Naive thymus-derived CD4-positive, alpha-beta T cell (primary cell): ENCODE measurements at regions of chr2 and their contacts with region 1.

Region 1: GRCh38 chr2:120680136-120680761 is 55.4 kb upstream of the GLI2 start:
- DNase-seq: peak; percentile 44 to 65 (median 59)
- ATAC-seq: peak; percentile 83
- H3K4me3 ChIP-seq: no peak overlapping the region
- H3K4me3 Mint-ChIP-seq: peak overlapping the region in 6 of 10 donors; percentile 0 to 48 (median 21)
- H3K27ac ChIP-seq: no peak overlapping the region
- H3K27ac Mint-ChIP-seq: peak overlapping the region in 6 of 9 donors; percentile 45 to 80 (median 72)
- H3K4me1 ChIP-seq: peaks cover 4% of the 10 kb centered on the region in 2 donors
- H3K4me1 Mint-ChIP-seq: peaks cover 0 to 5% (median 0%) of the 10 kb centered on the region in 7 donors
- H3K27me3 ChIP-seq: no peaks in the 10 kb centered on the region
- H3K27me3 Mint-ChIP-seq: peaks cover 18 to 50% (median 31%) of the 10 kb centered on the region in 5 donors

Region 2: DNA sequence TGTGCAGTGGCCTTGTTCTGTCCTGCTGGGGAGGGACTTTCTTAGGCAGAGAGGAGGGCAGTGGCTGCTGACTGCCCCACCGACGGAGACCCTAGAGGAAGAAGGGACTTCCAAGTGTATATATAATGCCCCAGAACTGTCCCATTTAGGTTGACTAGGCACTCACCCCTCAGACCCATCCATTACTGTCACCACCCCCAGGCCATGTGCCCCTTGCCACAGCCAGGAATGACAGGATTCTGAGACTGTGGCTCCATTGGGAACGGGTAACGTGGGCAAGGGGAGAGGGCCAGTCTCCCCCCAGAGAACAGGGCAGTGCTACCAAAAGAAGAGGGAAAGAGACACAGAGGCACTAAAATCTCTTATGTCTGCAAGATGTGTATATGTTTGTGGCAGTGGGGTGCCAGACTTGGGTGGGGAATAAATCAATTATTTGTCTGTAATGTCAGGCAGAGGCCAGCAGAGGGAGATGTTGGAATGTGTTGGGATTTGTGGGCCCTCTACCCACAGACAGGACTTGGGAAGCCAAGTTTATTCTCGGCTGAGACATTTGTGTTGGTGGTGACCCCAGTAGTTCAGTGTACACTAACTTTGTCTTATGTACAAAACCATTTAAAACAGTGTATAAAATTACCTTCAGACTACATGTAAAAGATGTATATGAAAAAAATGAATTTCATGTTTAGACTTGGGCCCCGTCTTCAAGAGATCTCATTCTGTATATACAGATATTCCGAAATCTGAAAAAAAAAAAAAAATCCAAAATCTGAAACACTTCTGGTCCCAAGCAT is 1272.6 kb before region 1 on chr2:
- CTCF ChIA-PET with region 1: no interaction called
- POLR2A ChIA-PET with region 1: no interaction called
- intact Hi-C with region 1: loop called in 1 of 2 experiments (anchors 2 kb)
- DNase-seq: peak in 6 of 9 donors; percentile 5 to 50 (median 30)
- ATAC-seq: peak; percentile 57
- H3K4me3 ChIP-seq: no peak overlapping the region
- H3K4me3 Mint-ChIP-seq: no peak overlapping the region
- H3K27ac ChIP-seq: no peak overlapping the region
- H3K27ac Mint-ChIP-seq: no peak overlapping the region
- H3K4me1 ChIP-seq: no peaks in the 10 kb centered on the region
- H3K4me1 Mint-ChIP-seq: no peaks in the 10 kb centered on the region
- H3K27me3 ChIP-seq: no peaks in the 10 kb centered on the region
- H3K27me3 Mint-ChIP-seq: peaks cover 7 to 16% (median 10%) of the 10 kb centered on the region in 5 donors

Region 3: GRCh38 chr2:119641562-119642258 is 1038.5 kb before region 1 on chr2:
- CTCF ChIA-PET with region 1: interaction called, 7 read pairs
- POLR2A ChIA-PET with region 1: no interaction called
- intact Hi-C with region 1: loop called (anchors 1 kb)
- DNase-seq: peak; percentile 42 to 77 (median 64)
- ATAC-seq: peak; percentile 95
- H3K4me3 ChIP-seq: no peak overlapping the region
- H3K4me3 Mint-ChIP-seq: no peak overlapping the region
- H3K27ac ChIP-seq: no peak overlapping the region
- H3K27ac Mint-ChIP-seq: no peak overlapping the region
- H3K4me1 ChIP-seq: peaks cover 0 to 4% of the 10 kb centered on the region in 2 donors
- H3K4me1 Mint-ChIP-seq: peaks cover 0 to 13% (median 5%) of the 10 kb centered on the region in 7 donors
- H3K27me3 ChIP-seq: no peaks in the 10 kb centered on the region
- H3K27me3 Mint-ChIP-seq: peaks cover 0 to 14% (median 0%) of the 10 kb centered on the region in 5 donors

Region 4: DNA sequence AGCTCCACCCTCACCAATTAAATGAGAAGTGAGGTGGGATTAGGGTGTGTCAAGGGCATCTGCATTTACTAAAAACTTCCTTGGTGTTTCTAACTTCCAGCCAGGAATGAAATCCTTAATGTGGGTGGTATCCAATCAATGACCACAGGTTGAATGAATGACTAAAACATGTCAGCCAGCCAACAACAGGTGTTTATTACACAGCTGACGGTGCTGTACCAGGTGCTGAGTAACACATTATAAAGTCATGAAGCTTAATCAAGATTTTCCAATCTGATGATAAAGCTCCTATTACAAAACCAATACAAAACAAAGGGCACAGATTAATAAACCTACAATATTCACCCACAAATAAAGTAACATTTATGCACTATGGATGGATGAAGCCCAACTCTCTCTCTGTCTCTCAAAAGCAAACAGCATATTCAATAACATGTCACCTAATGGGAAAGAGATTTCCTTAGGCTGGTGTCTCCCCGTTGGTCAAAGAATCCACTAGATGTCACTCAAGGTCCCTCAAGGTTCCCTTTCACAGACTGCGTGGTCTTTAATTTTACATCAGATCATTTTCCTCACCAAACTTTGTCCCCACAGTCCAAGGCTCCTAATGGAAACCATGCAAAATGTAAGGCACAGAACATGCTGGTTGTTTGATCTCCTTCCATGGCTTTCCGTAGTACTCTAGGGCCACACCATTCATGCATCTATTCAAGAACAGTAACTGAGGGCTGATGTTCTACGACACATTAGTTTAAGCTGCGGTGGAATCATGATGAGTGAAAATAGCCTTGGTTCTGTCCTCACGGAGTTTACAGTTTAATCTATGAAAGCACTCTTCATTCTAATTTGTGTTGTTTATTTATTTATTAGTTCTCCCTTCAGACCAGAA is 927.0 kb before region 1 on chr2:
- CTCF ChIA-PET with region 1: no interaction called
- POLR2A ChIA-PET with region 1: no interaction called
- intact Hi-C with region 1: loop called (anchors 1 to 5 kb)
- DNase-seq: peak in 7 of 9 donors; percentile 35 to 63 (median 52)
- ATAC-seq: peak; percentile 86
- H3K4me3 ChIP-seq: no peak overlapping the region
- H3K4me3 Mint-ChIP-seq: no peak overlapping the region
- H3K27ac ChIP-seq: no peak overlapping the region
- H3K27ac Mint-ChIP-seq: peak overlapping the region in 1 of 9 donors; percentile 37
- H3K4me1 ChIP-seq: no peaks in the 10 kb centered on the region
- H3K4me1 Mint-ChIP-seq: peaks cover under 1 to 10% (median 6%) of the 10 kb centered on the region in 7 donors
- H3K27me3 ChIP-seq: no peaks in the 10 kb centered on the region
- H3K27me3 Mint-ChIP-seq: peaks cover 0 to 23% (median 0%) of the 10 kb centered on the region in 5 donors

Region 5: GRCh38 chr2:120343433-120344105 is 336.7 kb before region 1 on chr2:
- CTCF ChIA-PET with region 1: no interaction called
- POLR2A ChIA-PET with region 1: no interaction called
- intact Hi-C with region 1: loop called (anchors 1 kb)
- DNase-seq: peak in 8 of 9 donors; percentile 37 to 66 (median 48)
- ATAC-seq: peak; percentile 64
- H3K4me3 ChIP-seq: peak overlapping the region; percentile 13
- H3K4me3 Mint-ChIP-seq: peak overlapping the region; percentile 45 to 79 (median 69)
- H3K27ac ChIP-seq: no peak overlapping the region
- H3K27ac Mint-ChIP-seq: no peak overlapping the region
- H3K4me1 ChIP-seq: peaks cover 9 to 15% of the 10 kb centered on the region in 2 donors
- H3K4me1 Mint-ChIP-seq: peaks cover 9 to 26% (median 22%) of the 10 kb centered on the region in 7 donors
- H3K27me3 ChIP-seq: peaks cover 5 to 40% of the 10 kb centered on the region in 2 donors
- H3K27me3 Mint-ChIP-seq: peaks cover 41 to 72% (median 51%) of the 10 kb centered on the region in 5 donors

Region 6: DNA sequence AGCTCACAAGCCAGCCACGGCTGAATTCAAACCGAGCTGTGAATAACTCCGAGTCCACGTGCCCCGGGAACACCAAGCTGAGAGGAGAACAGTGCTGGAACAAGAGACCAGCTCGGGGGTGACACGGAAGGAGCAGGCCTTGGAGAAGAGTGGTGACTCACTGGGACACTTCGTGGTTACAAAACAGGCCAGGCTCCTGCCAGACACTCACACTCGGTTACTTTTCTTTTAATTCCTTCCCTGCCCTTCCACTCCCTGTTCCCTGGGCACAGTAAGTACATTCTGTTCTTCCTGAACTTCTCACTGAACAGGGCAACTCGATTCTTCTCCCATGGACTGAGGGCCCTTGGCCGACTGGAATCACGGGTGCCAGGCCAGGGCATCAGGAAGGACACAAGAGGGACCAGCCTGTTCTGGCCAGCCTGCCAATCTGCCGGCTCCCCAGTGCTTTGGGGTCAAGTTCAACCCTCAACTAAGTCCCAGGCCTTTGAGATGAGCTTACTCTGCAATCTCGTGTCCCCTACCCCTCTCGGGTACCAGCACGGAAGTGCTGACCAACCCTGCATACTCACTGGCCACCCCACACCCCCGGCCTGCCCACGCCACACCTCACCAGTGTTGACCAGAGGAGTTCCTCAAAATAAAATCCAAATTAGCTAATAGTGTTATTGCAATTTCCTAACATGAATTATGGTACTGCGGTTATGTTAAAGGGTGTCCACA is 517.3 kb after region 1 on chr2:
- CTCF ChIA-PET with region 1: no interaction called
- POLR2A ChIA-PET with region 1: no interaction called
- intact Hi-C with region 1: no loop called
- DNase-seq: no peak
- ATAC-seq: peak; percentile 84
- H3K4me3 ChIP-seq: no peak overlapping the region
- H3K4me3 Mint-ChIP-seq: no peak overlapping the region
- H3K27ac ChIP-seq: no peak overlapping the region
- H3K27ac Mint-ChIP-seq: no peak overlapping the region
- H3K4me1 ChIP-seq: no peaks in the 10 kb centered on the region
- H3K4me1 Mint-ChIP-seq: peaks cover 0 to 3% (median 0%) of the 10 kb centered on the region in 7 donors
- H3K27me3 ChIP-seq: no peaks in the 10 kb centered on the region
- H3K27me3 Mint-ChIP-seq: no peaks in the 10 kb centered on the region